ENCODE measurements at regions of chr22 and their contacts with region 1.

Region 1: DNA sequence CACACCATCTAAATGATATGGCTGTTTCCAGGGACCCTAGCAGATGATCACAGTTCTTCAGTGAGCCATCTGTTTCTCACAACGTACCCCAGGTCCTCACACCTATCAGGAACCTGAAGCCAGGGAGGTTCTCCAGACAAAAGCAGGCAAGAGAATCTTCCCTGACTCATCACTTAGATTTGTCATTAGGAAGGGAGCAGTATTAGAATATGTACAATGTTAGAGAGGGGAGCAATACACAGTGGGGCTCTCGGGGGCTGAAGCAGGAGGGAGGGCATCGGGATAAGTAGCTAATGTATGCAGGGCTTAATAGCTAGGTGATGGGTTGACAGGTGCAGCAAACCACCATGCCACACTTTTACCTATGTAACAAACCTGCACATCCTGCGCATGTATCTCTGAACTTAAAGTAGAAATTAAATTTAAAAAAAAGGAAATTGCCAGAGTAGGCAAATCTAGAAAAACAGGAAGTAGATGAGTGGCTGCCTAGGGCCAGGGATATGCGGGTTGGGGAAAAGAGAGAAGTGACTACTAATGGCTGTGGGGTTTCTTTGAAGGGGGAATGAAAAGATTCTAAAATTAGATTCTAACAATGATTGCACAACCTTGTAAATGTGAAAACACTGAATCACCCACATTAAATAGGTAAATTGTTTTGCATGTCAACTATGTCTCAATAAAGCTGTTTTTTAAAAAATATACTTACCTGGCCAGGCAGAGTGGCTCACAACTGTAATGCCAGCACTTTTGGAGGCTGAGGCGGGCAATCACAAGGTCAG is 14.4 kb downstream of the C22orf42 start:
- DNase-seq: no peak
- H3K4me3 Mint-ChIP-seq: peak overlapping the region; percentile 4
- H3K27ac Mint-ChIP-seq: peak overlapping the region; percentile 18
- H3K4me1 Mint-ChIP-seq: peaks cover 41% of the 10 kb centered on the region
- H3K27me3 Mint-ChIP-seq: peaks cover 2% of the 10 kb centered on the region

Region 2: DNA sequence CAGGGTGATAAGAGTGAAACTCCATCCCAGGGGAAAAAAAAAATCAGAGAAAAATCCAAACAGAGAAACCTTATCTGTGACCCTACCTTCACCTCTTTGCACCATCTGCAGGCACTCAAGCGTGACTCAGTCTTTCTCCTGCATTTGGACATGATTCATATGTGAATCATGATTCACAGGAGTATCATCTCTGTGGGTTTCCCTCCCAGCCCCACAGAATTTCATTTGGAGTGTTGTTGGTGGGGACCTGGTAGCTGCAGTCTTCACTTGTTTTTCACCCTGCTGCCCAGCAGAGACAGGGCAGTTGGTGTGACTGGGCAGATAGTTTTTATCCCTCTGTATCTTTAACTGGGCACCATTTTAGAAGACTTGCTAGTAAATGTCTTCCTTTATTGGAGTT is 315.2 kb before region 1 on chr22:
- intact Hi-C with region 1: loop called (anchors 5 kb)
- DNase-seq: peak; percentile 7
- H3K4me3 Mint-ChIP-seq: peak overlapping the region; percentile 72
- H3K27ac Mint-ChIP-seq: peak overlapping the region; percentile 95
- H3K4me1 Mint-ChIP-seq: peaks cover 30% of the 10 kb centered on the region
- H3K27me3 Mint-ChIP-seq: no peaks in the 10 kb centered on the region

Region 3: DNA sequence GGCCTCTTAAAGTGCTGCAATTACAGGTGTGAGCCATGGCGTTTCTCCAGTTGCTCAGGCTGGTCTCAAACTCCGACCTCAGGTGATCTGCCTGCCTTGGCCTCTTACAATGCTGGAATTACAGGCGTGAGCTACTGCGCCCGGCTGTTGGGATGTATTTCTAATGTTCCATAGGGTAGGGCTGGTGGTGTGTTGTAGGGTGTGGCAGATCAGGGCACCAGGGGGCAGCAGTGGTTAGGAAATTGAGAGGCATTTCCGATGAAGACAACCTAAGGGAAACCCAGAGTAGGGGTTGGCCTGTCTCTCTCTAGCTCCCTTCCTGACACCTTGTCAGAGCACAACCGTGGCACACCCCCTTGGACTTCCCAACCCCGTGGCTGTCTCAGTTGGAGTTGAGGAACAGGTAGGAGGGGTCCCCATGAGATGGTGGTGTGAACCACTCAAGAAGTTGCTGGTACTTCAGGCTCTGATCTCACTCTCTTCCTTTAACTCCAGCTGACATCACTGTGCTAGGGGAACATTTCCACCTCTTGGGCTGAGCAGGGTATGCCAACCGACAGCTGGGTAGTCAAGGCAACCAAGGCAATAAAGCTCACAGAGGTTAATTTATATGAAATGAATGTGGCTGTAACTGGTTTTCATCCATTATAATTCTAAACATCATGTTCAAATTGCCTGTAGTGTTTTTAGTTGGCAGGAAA is 167.4 kb before region 1 on chr22:
- intact Hi-C with region 1: loop called (anchors 5 kb)
- DNase-seq: peak; percentile 60
- H3K4me3 Mint-ChIP-seq: no peak overlapping the region
- H3K27ac Mint-ChIP-seq: no peak overlapping the region
- H3K4me1 Mint-ChIP-seq: no peaks in the 10 kb centered on the region
- H3K27me3 Mint-ChIP-seq: peaks cover 10% of the 10 kb centered on the region

Region 4: DNA sequence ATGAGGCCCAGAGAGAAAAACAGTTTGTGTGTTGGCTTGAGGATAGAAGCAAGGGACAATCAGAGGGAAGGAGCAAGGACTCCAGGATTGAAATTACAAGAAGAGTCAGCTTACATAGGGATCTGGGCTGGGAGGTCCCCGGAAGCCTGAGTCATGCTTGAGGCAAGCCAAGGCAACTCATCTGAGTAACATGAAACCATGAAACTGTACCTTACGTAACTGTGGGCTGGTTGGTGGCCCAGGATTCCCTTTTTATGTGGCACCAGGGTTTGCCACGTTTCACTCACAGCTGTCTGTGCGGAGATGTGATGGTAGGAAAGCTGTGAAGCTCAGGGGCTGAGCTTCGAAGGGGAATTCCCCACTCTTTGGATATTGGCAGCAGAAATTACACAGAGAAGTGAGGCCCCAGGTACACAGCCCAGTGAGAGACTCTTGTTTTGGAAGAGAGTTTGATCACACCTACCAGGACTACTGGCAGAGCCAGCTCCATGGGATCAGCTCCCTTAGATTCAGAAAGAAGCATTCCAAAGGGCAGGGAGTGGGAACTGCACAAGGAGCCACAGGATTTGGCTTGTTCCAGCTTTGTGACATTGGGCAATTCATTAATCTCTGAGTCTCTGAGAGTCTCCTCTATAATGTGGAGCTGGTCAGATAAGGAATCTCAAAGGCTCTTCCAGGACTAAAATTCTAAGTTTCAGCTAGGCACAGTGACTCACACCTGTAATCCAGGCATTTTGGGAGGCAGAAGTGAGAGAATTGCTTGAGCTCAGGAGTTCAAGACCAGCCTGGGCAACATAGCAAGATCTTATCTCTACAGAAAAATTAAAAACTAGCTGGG is 93.8 kb before region 1 on chr22:
- intact Hi-C with region 1: loop called (anchors 2 kb)
- DNase-seq: peak; percentile 64
- H3K4me3 Mint-ChIP-seq: no peak overlapping the region
- H3K27ac Mint-ChIP-seq: peak overlapping the region; percentile 78
- H3K4me1 Mint-ChIP-seq: peaks cover 21% of the 10 kb centered on the region
- H3K27me3 Mint-ChIP-seq: peaks cover 76% of the 10 kb centered on the region

Region 5: GRCh38 chr22:32202539-32203180 is 58.0 kb after region 1 on chr22:
- intact Hi-C with region 1: loop called (anchors 1 kb)
- DNase-seq: no peak
- H3K4me3 Mint-ChIP-seq: peak overlapping the region; percentile 68
- H3K27ac Mint-ChIP-seq: no peak overlapping the region
- H3K4me1 Mint-ChIP-seq: peaks cover 34% of the 10 kb centered on the region
- H3K27me3 Mint-ChIP-seq: peaks cover 17% of the 10 kb centered on the region

Measured in activated T-helper 1 cell treated with anti-CD3 and anti-CD28 coated beads, Interleukin-12 subunit alpha, Interleukin-12 subunit beta, Interleukin-2, Interleukin-4 antibody, amounts not matched to agents 30 ng/mL and 10 ng/mL and 1 ng/mL, durations not matched to agents 14 hours and 24 hours and 36 hours (primary cell).